ENCODE measurements at regions of chr6 and their contacts with region 1.

Region 1: DNA sequence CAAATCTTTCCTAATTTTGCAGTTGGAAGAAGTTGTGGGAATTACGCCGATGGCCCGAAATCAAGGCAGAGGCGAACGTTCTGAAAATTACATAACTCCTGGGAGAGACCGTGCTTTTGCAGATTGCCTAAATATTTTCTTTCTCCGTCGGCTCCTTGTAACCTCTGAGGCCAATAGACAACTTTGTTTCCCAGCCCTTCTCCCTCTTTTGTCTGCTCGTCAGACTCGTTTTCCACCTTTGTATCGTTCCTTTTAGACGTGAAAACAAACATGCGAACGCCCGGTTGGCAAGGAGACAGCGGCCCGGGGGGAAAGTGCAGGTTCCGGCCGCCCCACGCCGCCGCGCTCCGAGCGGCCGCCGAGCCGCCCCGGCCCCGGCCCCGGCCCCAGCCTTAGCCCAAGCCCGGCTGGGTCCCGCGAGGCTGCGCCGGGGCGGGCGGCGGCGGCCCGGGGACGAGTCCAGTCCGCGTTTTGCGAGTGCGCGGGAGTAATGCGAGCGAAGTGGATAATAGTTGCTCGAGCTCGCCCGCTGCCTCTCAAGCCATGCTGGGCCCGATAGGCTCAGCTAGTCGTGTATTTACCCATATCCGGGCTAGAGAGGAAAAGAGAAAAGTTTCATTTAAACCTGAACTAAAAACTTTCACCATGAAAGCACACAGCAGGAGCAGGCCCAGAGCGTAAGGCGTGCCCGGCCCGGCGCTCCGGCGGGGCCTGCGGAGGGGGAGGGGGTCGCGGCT is at the start of gene ARID1B:
- DNase-seq: peak; percentile 93
- ATAC-seq: peak; percentile 75
- total RNA-seq, gene ARID1B: 46.4 TPM

Region 2: DNA sequence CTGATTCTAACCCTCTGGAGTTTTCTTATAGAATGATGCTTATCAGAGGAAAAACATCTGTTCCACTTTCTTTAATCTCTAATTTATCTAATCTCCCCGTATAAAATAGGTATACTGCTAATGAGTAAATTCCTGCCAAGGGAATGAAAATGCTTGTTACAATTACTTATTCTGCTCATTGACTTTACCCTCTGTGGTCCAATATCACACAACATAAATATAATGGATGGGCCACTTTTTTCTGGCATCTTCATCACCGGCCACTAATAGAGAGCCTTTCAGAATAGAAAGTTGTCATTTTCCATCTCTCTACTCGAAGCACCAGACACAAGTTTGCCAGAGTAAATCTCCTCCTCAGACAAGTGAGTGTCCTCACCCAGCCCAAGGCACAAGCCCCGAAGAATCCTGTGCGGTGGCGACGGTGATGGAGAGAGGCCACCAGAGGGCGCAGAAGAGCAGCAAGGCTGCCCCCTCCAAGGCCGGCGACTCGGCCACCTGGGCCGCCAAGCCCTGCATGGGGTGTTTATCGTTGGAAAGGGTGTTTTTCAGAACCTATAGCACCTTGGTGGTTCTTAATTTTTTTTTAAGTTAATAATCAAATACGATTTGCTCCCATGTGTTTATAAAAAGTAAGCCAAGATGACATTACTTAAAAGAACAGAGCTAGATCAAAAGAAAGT is 212.7 kb before region 1 on chr6:
- intact Hi-C with region 1: loop called (anchors 1 kb)
- DNase-seq: peak; percentile 90
- ATAC-seq: peak; percentile 94

Region 3: DNA sequence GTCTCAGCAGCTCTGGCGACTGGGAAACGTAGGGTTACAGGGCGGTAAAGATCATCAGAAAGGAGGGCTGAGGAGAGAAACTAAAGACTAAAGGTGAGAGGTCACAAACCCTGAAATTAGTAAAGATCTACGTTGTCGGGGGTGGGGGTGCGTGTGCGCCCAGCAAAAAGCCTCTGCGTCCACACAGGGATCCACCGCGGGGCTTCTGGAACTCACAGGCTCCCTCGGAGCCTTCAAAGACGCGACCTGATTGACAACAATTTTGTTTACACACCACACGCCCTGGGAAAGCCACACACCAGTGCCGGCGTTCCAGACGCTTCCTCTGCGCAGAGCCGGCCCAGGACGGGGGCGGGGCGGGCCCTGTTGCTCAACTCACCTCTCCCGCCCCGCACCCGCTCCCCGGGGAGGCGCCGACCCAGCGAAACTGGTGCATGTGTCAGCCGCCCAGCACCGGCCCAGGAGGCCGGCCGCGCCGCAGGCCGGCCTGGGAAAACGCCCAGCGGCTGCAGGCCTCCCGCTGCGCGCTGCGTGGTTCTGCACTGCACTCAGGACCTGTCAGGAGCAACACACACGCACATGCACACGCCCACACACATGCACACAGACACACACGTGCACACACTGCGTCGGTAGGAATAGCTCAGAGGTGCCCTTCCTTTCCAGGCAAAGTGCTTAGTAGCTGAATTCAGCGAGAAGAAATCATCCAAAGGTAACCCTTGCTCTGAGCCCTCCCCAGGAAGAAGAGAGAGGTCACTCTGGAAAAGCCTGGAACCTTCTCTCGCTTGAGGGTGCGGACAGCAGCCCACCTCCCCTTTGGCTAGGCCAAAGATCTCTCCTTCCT is 57.1 kb before region 1 on chr6:
- intact Hi-C with region 1: loop called (anchors 2 kb)
- DNase-seq: peak; percentile 98
- ATAC-seq: peak; percentile 99

Region 4: DNA sequence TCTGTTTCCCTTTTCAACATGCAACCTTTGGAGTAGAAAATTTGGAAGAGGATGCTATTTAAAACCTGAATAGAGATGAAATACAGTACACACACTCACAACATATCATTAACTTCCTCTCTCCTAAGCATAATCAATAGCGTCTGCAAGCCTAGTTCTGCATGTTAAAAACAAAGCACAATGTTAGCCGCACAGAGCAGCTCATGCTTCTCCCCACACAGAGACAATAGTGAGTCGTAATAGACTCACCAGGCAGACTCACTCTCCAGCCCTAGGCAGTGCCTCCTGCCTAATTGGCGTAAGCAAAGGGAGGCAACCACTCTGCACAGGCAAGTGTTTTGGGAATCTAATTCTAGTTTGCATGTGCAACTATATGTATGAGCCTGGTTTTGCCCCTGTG is 45.6 kb before region 1 on chr6:
- intact Hi-C with region 1: no loop called
- DNase-seq: no peak
- ATAC-seq: no peak

Region 5: DNA sequence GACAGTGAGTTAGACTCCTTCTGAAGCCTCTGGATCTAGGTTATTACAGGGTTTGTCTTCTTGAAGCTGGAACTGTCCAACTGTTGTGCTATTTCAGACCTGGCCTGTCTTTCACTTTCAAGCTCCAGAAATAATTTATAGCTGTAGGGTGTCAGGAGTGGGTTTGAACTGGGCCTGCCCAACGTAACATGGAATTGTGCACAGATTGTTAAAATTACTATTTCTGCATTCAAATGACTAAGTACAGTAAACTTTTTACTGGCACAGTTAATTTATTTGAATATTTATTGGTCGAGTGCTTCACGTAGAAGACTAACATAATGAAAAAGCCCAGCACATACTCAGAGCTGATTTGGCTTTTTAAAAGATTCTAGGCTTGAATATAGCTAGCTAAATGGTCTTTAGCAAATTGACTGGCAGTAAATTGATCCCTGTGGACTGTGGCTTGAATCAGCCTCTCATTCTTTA is 74.5 kb after region 1 on chr6:
- intact Hi-C with region 1: loop called (anchors 2 kb)
- DNase-seq: no peak
- ATAC-seq: no peak

Region 6: GRCh38 chr6:157184202-157185020 is 407.4 kb after region 1 on chr6:
- intact Hi-C with region 1: loop called (anchors 5 kb)
- DNase-seq: peak; percentile 80
- ATAC-seq: peak; percentile 73

Measured in Right ventricle myocardium inferior (tissue), 1 donor.